Pancreas (tissue), 10 donors: ENCODE measurements at regions of chr7 and their contacts with region 1.

Region 1: DNA sequence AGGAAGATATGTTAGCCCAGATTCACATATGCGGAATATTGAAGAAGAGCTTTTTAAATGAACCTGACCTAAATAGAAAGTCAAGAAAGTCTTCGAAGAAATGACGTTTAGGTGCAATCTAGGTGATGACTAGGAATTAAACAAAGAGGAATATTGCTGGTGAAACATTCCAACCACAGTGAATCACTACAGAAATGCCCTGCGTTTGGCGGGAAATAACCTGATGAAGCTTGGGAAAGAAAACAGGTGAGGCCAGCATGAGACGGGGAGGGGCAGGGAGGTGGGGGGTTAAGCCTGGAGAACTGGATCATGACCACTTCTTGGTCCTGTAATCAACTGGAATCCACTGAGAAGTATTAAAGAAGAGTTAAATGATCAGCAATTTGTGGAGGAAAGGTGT is 299.4 kb upstream of the VSTM2A start:
- DNase-seq: no peak
- ATAC-seq: no peak
- H3K4me3 ChIP-seq: no peak overlapping the region
- H3K27ac ChIP-seq: no peak overlapping the region
- H3K4me1 ChIP-seq: no peaks in the 10 kb centered on the region
- H3K27me3 ChIP-seq: no peaks in the 10 kb centered on the region
- CTCF ChIP-seq: no peak

Region 2: GRCh38 chr7:54349229-54349628 is 106.5 kb after region 1 on chr7:
- intact Hi-C with region 1: loop called in 1 of 3 experiments (anchors 10 kb)
- DNase-seq: no peak
- ATAC-seq: no peak
- H3K4me3 ChIP-seq: no peak overlapping the region
- H3K27ac ChIP-seq: no peak overlapping the region
- H3K4me1 ChIP-seq: no peaks in the 10 kb centered on the region
- H3K27me3 ChIP-seq: no peaks in the 10 kb centered on the region
- CTCF ChIP-seq: no peak

Region 3: DNA sequence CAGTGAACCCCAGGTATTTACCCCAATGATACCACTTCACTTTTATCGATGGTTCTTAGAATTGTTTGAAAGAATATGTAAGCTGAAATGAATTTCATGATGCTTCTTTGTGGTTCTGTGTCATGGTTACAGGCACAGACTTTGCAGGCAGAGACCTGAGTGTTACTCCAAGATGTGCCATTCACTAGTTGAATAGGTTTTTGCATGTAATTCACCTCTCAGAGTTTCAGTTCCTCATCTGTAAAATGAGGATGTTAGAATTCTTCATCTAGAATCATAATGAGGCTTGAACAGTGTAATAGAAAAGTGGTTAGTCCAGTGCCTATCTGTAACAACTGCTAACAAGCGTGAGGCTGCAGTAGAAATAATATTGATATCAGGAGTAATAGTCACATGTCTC is 354.0 kb after region 1 on chr7:
- intact Hi-C with region 1: no loop called
- DNase-seq: no peak
- ATAC-seq: no peak
- H3K4me3 ChIP-seq: no peak overlapping the region
- H3K27ac ChIP-seq: no peak overlapping the region
- H3K4me1 ChIP-seq: no peaks in the 10 kb centered on the region
- H3K27me3 ChIP-seq: no peaks in the 10 kb centered on the region
- CTCF ChIP-seq: no peak